ENCODE measurements at regions of chr19 and their contacts with region 1.

Region 1: GRCh38 chr19:48588670-48589399 is 17.7 kb upstream of the SPACA4 start:
- DNase-seq: peak; percentile 95
- H3K4me3 ChIP-seq: peak overlapping the region in 3 of 4 donors; percentile 28 to 41 (median 31)
- H3K27ac ChIP-seq: peak overlapping the region in 3 of 4 donors; percentile 5 to 48 (median 32)
- H3K4me1 ChIP-seq: peaks cover 0 to 15% (median 5%) of the 10 kb centered on the region in 4 donors
- H3K27me3 ChIP-seq: no peaks in the 10 kb centered on the region
- CTCF ChIP-seq: peak; percentile 89 to 98 (median 96)
- EP300 ChIP-seq: no peak
- POLR2A ChIP-seq: no peak

Region 2: DNA sequence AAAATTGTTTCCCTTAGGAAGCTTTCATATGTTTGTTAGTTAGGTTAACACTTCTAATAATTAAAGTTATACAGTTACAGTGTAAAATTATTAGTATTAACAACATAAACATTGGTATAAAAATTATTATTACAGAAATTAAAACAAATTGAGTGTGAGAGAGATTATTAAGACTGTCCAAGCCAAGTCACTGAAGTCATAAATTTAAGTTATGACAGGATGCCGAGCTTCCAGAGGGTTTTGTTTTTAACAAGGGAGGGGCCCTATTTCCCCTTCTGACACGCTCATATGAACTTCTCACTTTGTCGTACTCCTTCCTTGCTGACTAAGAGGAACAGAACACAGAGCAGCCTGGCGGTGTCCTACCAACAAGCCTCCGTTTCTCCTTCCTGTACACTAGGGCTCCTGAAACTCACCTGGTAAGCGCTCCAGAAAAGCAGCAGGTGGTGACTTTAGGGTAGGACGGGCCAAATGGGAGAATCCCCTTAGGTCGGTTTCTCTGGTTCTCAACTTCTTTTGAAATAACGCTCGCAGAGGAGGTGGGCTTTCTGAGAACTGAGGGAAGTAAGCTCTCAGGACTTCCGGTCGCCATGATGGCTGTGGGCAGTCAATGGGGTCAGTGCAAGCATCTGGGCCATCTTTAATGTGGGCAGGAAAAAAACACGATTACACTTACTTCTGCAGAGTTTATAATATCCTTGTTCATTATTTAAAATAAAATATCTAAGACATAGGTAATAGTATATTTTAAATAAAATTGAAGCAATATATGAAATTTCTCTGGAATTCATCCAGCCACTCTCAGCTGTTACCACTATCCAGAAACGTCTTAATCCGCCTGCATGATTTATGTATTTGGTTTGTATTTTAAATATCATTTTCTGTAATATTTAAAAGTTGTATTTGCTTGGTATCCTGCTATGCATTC is 333.2 kb before region 1 on chr19 and contains the start of gene CARD8:
- in situ Hi-C with region 1: loop called in 1 of 4 experiments (anchors 25 kb)
- intact Hi-C with region 1: no loop called
- DNase-seq: peak; percentile 87
- H3K4me3 ChIP-seq: peak within 1 kb of the TSS; percentile 48 to 79 (median 64)
- H3K27ac ChIP-seq: peak within 1 kb of the TSS; percentile 87 to 96 (median 94)
- H3K4me1 ChIP-seq: peaks cover 9 to 34% (median 15%) of the 10 kb centered on the region in 4 donors
- H3K27me3 ChIP-seq: no peaks in the 10 kb centered on the region
- CTCF ChIP-seq: peak in 2 of 5 experiments; percentile 38 to 48
- EP300 ChIP-seq: no peak
- POLR2A ChIP-seq: peak; percentile 82
- total RNA-seq, gene CARD8: 13.1 to 48.4 (median 29.4) TPM

Region 3: DNA sequence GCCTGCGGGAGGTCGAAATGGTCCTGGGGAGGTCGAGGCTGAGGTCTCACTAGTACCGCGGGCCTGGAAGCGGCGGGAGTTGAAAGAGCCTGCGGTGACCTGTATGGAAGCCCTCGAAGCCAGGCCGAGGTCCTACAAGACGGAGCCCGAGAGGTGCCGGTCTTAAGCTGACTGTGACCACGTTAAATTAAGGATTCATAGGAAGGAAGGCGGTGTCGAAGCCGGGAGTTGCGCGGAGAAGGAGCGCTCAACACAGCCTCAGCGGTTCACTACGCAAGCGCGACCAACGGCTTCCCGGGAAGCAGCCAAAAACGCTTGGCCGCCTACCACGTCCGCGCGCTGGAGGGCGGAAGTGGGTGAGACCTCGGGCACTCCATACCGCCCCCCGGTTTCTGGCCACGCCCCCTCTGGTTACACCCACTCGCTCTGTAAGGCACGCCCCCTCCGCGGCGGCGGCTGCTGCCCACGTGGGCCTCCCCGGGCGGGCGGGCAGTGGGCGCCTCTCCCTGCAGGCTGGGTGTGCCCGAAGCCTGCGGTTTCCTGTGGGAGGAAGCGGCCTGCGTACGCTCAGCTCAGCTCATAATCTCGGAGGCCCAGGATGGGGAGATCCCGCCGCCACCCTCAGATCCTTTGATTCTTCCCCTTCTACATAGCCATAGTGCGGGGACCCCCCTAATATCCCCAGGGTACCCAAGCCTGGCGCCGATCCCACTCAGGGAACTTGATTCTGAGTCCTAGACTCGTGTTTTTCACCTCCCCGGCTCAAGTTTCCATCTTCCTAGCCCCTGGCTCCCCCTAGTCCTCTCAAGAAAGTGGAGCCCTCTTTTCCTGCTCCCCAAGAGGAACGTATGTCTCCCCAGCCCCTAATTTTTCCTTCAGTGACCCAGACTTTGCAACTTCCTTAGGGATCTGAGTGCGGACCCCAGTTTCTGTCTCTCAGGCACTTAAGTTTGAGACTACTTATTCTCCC is 266.9 kb before region 1 on chr19:
- in situ Hi-C with region 1: loop called in 1 of 4 experiments (anchors 25 kb)
- intact Hi-C with region 1: no loop called
- DNase-seq: peak; percentile 100
- H3K4me3 ChIP-seq: peak overlapping the region; percentile 46 to 82 (median 58)
- H3K27ac ChIP-seq: peak overlapping the region; percentile 99 to 100 (median 99)
- H3K4me1 ChIP-seq: peaks cover 28 to 68% (median 41%) of the 10 kb centered on the region in 4 donors
- H3K27me3 ChIP-seq: no peaks in the 10 kb centered on the region
- CTCF ChIP-seq: peak in 4 of 5 experiments; percentile 6 to 40 (median 18)
- EP300 ChIP-seq: no peak
- POLR2A ChIP-seq: peak; percentile 95

Region 4: DNA sequence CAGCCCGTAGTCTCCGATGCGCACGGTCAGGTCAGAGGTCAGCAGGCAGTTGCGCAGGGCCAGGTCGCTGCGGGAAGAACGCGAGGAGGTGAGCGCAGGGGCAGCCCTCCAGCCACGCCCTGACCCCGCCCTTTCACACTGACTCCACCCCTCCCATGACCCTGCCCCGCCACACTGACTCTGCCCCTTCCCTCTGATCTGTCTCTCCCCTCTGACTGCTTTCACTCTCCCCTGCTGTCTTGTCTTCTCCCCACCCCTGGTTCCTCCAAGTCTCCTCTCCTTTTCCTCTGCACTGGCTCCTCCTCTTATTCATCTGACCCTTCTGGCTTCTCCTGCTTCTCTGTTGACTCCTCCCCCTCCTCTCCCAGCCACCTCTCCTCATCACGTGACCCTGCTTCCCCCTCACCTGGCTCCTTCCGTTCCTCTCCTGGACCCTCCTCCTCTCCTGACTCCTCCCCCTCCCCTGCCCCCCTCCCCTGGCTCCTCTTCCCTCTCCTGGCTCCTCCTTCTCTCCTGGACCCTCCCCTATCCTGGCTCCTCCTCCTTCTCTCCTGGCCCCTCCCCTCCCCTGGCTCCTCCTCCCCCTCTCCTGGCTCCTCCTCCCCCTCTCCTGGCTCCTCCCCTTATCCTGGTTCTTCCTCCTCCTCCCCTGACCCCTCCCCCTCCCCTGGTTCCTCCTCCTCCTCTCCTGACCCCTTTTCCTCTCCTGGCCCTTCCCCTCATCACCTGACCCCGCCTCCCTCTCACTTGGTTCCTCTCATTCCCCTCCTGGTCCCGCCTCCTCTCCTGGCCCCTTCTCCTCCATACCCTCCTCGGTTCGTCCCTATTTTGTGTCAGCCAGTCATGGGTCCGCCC is 87.1 kb before region 1 on chr19:
- in situ Hi-C with region 1: loop called (anchors 5 to 10 kb)
- intact Hi-C with region 1: no loop called
- DNase-seq: peak; percentile 92
- H3K4me3 ChIP-seq: peak overlapping the region in 2 of 4 donors; percentile 11 to 32
- H3K27ac ChIP-seq: peak overlapping the region in 1 of 4 donors; percentile 29
- H3K4me1 ChIP-seq: peaks cover 0 to 22% (median 11%) of the 10 kb centered on the region in 4 donors
- H3K27me3 ChIP-seq: peaks cover 49% of the 10 kb centered on the region
- CTCF ChIP-seq: no peak
- EP300 ChIP-seq: no peak
- POLR2A ChIP-seq: no peak

Region 5: DNA sequence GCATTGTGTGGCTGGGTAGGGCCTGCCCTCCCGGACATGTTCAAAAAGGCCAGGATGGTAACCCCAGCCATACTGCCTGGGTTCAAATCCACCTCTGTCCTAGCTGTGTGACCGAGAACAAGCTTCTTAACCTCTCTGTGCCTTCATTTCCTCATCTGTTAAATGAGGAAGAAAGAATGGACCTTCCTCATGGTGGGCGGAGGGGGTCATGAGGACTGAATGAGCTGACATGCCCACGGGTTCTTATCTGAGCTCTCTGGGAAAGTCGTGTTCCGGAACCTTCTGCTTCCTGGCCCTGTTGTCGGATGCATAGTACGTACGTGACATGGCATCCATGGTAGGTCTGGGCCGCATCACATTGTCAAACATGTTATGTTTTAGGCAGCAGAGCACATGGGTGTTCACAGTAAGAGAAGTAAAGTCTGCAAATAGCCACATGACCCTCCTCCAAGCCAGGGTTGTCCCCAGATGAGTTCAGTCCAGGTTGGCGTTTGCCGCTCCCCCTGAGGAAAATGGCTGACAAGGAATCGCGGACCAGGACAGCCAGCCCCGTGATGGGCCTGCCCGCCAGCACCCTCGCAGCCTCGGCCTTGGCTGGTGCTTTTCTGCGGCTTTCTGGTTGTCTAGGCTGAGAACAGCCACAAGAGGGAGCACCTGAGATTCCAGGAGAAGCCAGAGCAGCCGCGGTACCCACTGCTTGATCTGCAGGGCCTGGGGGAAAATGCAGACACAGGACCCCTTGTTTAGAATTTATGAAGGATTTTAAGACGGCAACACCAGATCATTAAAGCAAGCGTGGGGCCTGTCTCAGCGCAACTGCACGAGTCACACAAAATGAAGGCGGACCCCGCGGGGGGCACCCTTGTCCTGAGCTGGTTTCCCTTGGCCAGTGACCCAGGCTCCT is 86.3 kb after region 1 on chr19:
- in situ Hi-C with region 1: no loop called
- intact Hi-C with region 1: no loop called
- DNase-seq: peak; percentile 86
- H3K4me3 ChIP-seq: no peak overlapping the region
- H3K27ac ChIP-seq: peak overlapping the region in 1 of 4 donors; percentile 6
- H3K4me1 ChIP-seq: peaks cover 5 to 26% (median 18%) of the 10 kb centered on the region in 4 donors
- H3K27me3 ChIP-seq: no peaks in the 10 kb centered on the region
- CTCF ChIP-seq: peak; percentile 87 to 90 (median 88)
- EP300 ChIP-seq: no peak
- POLR2A ChIP-seq: no peak